ENCODE measurements at regions of chr3 and their contacts with region 1.

Region 1: DNA sequence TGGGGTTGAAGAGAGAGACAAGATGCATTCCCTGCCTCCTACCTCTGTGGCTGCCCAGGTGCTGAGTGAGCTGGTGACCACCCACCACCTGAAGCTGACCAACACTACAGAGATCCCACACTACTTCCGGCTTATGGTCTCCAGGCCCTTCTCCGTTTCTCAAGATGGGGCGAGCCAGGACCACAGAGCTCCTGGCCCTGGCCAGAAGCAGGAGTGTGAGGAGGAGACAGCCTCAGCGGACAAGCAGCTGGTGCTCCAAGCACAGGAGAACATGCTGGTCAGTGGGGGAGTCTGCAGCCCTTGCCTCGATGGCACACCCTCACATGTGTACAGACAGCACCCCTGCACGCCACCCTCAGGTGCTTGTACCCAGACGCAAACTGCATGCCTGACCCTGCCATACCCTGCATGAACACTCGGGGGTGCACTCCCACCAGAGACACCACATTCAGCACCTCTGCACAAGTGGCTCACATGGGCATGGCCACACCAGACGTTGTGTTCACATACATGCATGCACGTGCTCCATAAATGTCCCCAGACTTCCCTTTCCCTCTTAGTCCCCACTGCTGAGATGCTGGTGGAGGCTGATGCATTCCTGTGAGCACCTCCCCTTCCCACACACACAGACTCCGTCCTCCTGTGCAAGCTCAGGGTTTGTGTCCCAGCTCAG is 19.0 kb downstream of the ACAA1 start:
- DNase-seq: peak; percentile 60 to 81 (median 75)
- ATAC-seq: peak; percentile 99
- H3K4me3 ChIP-seq: no peak overlapping the region
- H3K4me3 Mint-ChIP-seq: no peak overlapping the region
- H3K27ac ChIP-seq: no peak overlapping the region
- H3K27ac Mint-ChIP-seq: no peak overlapping the region
- H3K4me1 ChIP-seq: no peaks in the 10 kb centered on the region
- H3K4me1 Mint-ChIP-seq: peaks cover 6% of the 10 kb centered on the region
- H3K27me3 ChIP-seq: no peaks in the 10 kb centered on the region
- H3K27me3 Mint-ChIP-seq: no peaks in the 10 kb centered on the region
- CTCF ChIP-seq: peak; percentile 73

Region 2: GRCh38 chr3:37887062-37887461 is 230.8 kb before region 1 on chr3:
- CTCF ChIA-PET with region 1: no interaction called
- POLR2A ChIA-PET with region 1: no interaction called
- intact Hi-C with region 1: no loop called
- DNase-seq: no peak
- ATAC-seq: no peak
- H3K4me3 ChIP-seq: no peak overlapping the region
- H3K4me3 Mint-ChIP-seq: no peak overlapping the region
- H3K27ac ChIP-seq: no peak overlapping the region
- H3K27ac Mint-ChIP-seq: no peak overlapping the region
- H3K4me1 ChIP-seq: no peaks in the 10 kb centered on the region
- H3K4me1 Mint-ChIP-seq: no peaks in the 10 kb centered on the region
- H3K27me3 ChIP-seq: no peaks in the 10 kb centered on the region
- H3K27me3 Mint-ChIP-seq: no peaks in the 10 kb centered on the region
- CTCF ChIP-seq: no peak

Region 3: DNA sequence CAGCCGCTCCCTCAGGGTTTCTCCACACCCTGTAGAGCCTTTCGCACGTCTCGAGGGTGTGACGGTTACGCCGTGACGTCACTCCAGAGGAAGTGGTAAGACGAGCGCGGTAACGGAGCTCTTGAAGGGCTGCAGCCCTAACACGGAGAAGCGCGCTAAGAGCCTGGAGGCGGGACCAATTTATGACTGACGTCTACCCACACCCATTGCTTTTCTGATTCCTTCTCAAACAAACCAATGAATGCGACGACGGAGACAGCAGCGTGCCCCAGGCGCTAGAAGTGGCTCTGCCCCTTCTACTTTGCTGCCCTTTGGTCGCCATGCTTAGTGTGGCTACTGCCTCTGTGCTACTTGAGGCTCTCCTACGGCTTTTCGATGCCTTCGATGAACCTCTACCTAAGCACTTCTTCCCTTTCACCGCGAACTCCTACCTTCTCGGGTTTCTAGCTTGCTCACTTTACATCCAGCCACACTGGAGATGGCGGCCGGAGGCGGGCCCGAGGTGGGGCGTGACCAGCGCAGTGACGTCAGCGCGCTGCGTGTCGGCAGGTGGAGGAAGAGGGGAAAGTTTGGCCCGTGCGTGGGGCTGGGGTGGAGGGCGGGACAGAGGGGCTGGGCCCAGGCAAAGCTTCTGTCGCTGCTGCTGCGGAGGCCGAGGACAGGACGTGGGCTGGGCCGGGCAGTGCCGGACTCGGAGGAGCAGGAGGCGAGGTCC is 47.2 kb after region 1 on chr3 and contains the start of gene OXSR1:
- CTCF ChIA-PET with region 1: interaction called, 13 read pairs
- POLR2A ChIA-PET with region 1: interaction called, 3 read pairs
- intact Hi-C with region 1: no loop called
- DNase-seq: peak; percentile 91 to 100 (median 97)
- ATAC-seq: peak; percentile 89
- H3K4me3 ChIP-seq: peak within 1 kb of the TSS; percentile 76 to 84
- H3K4me3 Mint-ChIP-seq: peak within 1 kb of the TSS; percentile 91
- H3K27ac ChIP-seq: peak within 1 kb of the TSS; percentile 94 to 99
- H3K27ac Mint-ChIP-seq: peak within 1 kb of the TSS; percentile 100
- H3K4me1 ChIP-seq: peaks cover 23% of the 10 kb centered on the region
- H3K4me1 Mint-ChIP-seq: peaks cover 46% of the 10 kb centered on the region
- H3K27me3 ChIP-seq: no peaks in the 10 kb centered on the region
- H3K27me3 Mint-ChIP-seq: no peaks in the 10 kb centered on the region
- CTCF ChIP-seq: no peak
- total RNA-seq, gene OXSR1: 45.4 to 45.6 TPM

Region 4: GRCh38 chr3:38247366-38248035 is 129.6 kb after region 1 on chr3:
- CTCF ChIA-PET with region 1: interaction called, 5 read pairs
- POLR2A ChIA-PET with region 1: no interaction called
- intact Hi-C with region 1: loop called in 1 of 2 experiments (anchors 5 kb)
- DNase-seq: no peak
- ATAC-seq: no peak
- H3K4me3 ChIP-seq: no peak overlapping the region
- H3K4me3 Mint-ChIP-seq: no peak overlapping the region
- H3K27ac ChIP-seq: no peak overlapping the region
- H3K27ac Mint-ChIP-seq: peak overlapping the region; percentile 42
- H3K4me1 ChIP-seq: no peaks in the 10 kb centered on the region
- H3K4me1 Mint-ChIP-seq: peaks cover 13% of the 10 kb centered on the region
- H3K27me3 ChIP-seq: no peaks in the 10 kb centered on the region
- H3K27me3 Mint-ChIP-seq: no peaks in the 10 kb centered on the region
- CTCF ChIP-seq: no peak

Region 5: DNA sequence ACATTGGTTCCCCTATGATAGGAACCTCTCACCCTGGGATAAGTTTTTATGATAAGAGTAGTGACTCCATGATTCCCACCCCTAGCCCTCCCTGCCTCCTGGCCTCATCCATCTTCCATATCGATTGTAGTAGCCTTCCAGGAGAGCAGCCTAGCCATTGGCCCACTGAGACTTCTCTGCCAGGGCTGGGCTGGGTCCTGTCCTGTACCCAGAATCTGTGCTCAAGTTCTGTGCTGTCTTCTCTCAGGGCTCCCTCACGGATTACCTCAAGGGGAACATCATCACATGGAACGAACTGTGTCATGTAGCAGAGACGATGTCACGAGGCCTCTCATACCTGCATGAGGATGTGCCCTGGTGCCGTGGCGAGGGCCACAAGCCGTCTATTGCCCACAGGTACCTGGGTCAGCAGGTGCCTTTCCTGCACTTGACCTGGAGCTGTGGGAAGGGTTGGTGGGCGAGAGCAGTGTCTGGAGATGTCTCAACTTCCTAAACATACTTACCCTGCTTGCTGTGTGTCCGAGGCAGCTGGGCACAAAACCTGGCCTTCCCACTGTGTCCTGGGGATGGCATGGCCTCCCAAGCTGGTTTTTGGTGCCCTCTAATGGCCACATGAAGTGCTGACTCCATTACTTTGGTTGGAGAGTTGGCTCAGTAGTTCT is 361.7 kb after region 1 on chr3:
- CTCF ChIA-PET with region 1: interaction called, 25 read pairs
- POLR2A ChIA-PET with region 1: interaction called, 3 read pairs
- intact Hi-C with region 1: loop called in 1 of 2 experiments (anchors 1 kb)
- DNase-seq: peak in 7 of 9 experiments; percentile 18 to 72 (median 48)
- ATAC-seq: peak; percentile 55
- H3K4me3 ChIP-seq: no peak overlapping the region
- H3K4me3 Mint-ChIP-seq: no peak overlapping the region
- H3K27ac ChIP-seq: no peak overlapping the region
- H3K27ac Mint-ChIP-seq: no peak overlapping the region
- H3K4me1 ChIP-seq: no peaks in the 10 kb centered on the region
- H3K4me1 Mint-ChIP-seq: peaks cover 2% of the 10 kb centered on the region
- H3K27me3 ChIP-seq: no peaks in the 10 kb centered on the region
- H3K27me3 Mint-ChIP-seq: no peaks in the 10 kb centered on the region
- CTCF ChIP-seq: peak; percentile 75

Measured in CD8-positive, alpha-beta T cell (primary cell).